GM10248 (cell line): ENCODE measurements at regions of chr7 and their contacts with region 1.

Region 1: DNA sequence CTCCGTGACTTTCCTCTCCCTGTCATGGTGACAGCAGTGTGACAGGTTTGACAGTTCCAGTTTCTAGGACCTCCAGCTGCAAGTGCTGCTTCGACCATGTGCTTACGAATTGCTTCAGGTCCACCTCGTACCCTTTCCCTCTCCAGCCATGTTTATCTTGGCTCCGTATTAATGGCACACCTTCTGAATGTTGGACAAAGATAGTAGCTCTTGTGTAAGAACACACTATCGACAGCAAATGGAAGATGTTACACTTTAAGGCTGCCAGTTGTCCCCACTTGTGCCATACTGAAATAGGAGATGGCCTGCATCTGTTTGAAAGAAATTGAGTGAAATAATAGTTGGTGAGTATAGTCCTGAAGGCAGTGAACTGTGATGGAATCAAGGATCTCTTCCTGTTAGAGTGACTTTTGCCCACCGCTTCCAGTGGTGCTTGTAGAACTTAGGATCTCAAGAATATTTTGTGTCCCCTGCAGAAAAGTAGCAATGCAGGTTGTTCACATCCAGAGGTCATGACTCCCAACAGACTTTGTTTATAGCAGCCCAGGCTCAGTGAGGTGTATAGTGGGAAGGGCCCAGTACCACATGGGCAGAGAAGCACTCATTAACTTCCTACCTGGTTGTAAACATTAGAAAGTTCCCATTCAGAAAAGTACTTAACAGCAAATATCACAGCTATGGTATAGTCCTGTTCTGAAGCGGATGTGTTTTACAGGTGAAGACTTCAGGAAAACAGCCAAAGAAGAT is 629.7 kb upstream of the GALNT17 start:
- DNase-seq: no peak
- CTCF ChIP-seq: no peak

Region 2: GRCh38 chr7:70436790-70437350 is 65.4 kb before region 1 on chr7:
- CTCF ChIA-PET with region 1: no interaction called
- POLR2A ChIA-PET with region 1: no interaction called
- DNase-seq: no peak
- CTCF ChIP-seq: no peak

Region 3: GRCh38 chr7:70512761-70513160 is 10.5 kb after region 1 on chr7:
- CTCF ChIA-PET with region 1: interaction called, 10 read pairs
- POLR2A ChIA-PET with region 1: no interaction called
- DNase-seq: no peak
- CTCF ChIP-seq: no peak

Region 4: GRCh38 chr7:70539205-70539604 is 36.9 kb after region 1 on chr7:
- CTCF ChIA-PET with region 1: no interaction called
- POLR2A ChIA-PET with region 1: no interaction called
- DNase-seq: no peak
- CTCF ChIP-seq: no peak

Region 5: DNA sequence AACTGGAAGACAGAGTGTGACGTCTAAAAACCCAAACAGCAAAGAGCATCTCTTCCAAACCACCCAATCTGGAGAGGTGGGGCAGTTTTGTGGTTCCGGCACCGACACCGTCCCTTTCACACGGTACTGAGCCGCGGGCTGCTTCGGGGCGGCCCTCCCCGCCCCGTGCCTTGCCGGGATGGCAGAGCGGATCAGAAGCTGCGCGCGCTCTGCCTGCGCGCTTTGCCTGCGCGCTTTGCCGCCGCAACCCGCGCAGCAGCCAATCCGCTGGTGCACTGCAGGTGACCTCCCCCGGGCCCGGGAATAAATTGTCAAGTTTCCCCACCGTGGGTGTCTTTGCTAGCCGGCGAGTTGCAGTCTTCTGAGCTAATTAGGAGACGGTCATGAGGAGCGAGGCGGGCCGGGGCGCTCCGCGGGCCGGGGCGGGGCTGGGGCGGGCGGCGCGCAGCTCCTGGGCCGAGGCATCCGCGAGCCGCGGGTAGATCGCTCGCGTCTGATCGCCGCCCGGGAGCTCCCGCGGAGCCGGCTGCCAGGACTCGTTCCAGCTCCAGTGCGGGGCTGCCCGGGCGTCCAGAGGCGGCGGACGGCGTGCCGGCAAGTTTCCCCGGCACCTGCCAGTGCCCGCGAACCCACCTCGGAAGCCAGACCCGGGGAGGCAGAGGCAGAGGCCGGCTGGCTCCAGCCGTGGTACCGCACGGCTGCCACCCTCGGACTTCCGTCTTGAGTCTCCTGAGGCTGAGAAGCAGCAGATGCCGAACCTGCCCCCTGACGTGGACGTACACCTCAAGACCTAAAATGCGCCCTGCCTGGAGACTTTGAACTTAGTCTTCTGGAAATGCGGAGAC is 93.7 kb after region 1 on chr7:
- CTCF ChIA-PET with region 1: no interaction called
- POLR2A ChIA-PET with region 1: no interaction called
- DNase-seq: peak; percentile 34
- CTCF ChIP-seq: no peak

Region 6: GRCh38 chr7:70612811-70613210 is 110.5 kb after region 1 on chr7:
- CTCF ChIA-PET with region 1: no interaction called
- POLR2A ChIA-PET with region 1: no interaction called
- DNase-seq: no peak
- CTCF ChIP-seq: no peak